Naive thymus-derived CD4-positive, alpha-beta T cell (primary cell): ENCODE measurements at regions of chr1 and their contacts with region 1.

Region 1: GRCh38 chr1:77126307-77126706 is 92.9 kb downstream of the PIGK start:
- DNase-seq: peak in 6 of 9 donors; percentile 17 to 50 (median 38)
- ATAC-seq: peak; percentile 61
- H3K4me3 ChIP-seq: no peak overlapping the region
- H3K4me3 Mint-ChIP-seq: no peak overlapping the region
- H3K27ac ChIP-seq: no peak overlapping the region
- H3K27ac Mint-ChIP-seq: peak overlapping the region in 2 of 9 donors; percentile 22 to 41
- H3K4me1 ChIP-seq: no peaks in the 10 kb centered on the region
- H3K4me1 Mint-ChIP-seq: peaks cover 0 to 6% (median 0%) of the 10 kb centered on the region in 7 donors
- H3K27me3 ChIP-seq: no peaks in the 10 kb centered on the region
- H3K27me3 Mint-ChIP-seq: no peaks in the 10 kb centered on the region

Region 2: DNA sequence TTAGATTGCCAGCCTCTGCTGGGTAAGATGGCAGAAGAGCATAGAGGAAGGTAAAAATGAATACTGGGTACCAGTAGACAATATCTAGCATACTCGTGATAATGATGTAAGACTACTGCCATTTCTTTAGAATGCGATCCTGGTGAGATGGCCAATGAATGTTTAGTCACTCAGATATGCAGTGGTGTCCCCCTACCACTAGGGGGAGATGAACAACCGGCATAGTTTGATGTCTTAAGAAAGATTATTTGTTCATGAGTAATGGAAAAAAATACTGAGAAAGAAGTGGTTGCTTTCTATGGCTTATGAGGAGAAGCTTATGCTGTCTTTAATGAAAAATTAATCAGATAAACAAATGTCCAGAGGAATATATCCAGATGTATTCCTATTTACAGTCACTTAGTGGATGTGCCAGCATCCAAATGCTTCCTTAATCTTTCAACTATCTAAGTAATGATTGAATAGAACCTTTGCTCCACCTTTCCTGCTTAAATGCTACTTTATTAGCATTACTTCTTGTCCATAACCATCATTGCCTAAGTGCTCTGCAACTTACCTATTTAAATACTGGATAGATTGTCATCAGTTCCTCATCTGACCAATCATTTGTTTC is 795.2 kb before region 1 on chr1:
- CTCF ChIA-PET with region 1: interaction called, 3 read pairs
- POLR2A ChIA-PET with region 1: no interaction called
- intact Hi-C with region 1: loop called (anchors 5 kb)
- DNase-seq: peak in 7 of 9 donors; percentile 19 to 56 (median 51)
- ATAC-seq: peak; percentile 63
- H3K4me3 ChIP-seq: no peak overlapping the region
- H3K4me3 Mint-ChIP-seq: no peak overlapping the region
- H3K27ac ChIP-seq: no peak overlapping the region
- H3K27ac Mint-ChIP-seq: peak overlapping the region in 1 of 9 donors; percentile 16
- H3K4me1 ChIP-seq: no peaks in the 10 kb centered on the region
- H3K4me1 Mint-ChIP-seq: peaks cover 0 to 41% (median 14%) of the 10 kb centered on the region in 7 donors
- H3K27me3 ChIP-seq: no peaks in the 10 kb centered on the region
- H3K27me3 Mint-ChIP-seq: no peaks in the 10 kb centered on the region

Region 3: GRCh38 chr1:76901158-76901767 is 225.0 kb before region 1 on chr1:
- CTCF ChIA-PET with region 1: no interaction called
- POLR2A ChIA-PET with region 1: no interaction called
- intact Hi-C with region 1: loop called (anchors 1 to 5 kb)
- DNase-seq: peak in 6 of 9 donors; percentile 4 to 41 (median 30)
- ATAC-seq: peak; percentile 53
- H3K4me3 ChIP-seq: no peak overlapping the region
- H3K4me3 Mint-ChIP-seq: no peak overlapping the region
- H3K27ac ChIP-seq: no peak overlapping the region
- H3K27ac Mint-ChIP-seq: no peak overlapping the region
- H3K4me1 ChIP-seq: no peaks in the 10 kb centered on the region
- H3K4me1 Mint-ChIP-seq: no peaks in the 10 kb centered on the region
- H3K27me3 ChIP-seq: no peaks in the 10 kb centered on the region
- H3K27me3 Mint-ChIP-seq: peaks cover 0 to 7% (median 0%) of the 10 kb centered on the region in 5 donors